ENCODE measurements at regions of chr3 and their contacts with region 1.

Region 1: DNA sequence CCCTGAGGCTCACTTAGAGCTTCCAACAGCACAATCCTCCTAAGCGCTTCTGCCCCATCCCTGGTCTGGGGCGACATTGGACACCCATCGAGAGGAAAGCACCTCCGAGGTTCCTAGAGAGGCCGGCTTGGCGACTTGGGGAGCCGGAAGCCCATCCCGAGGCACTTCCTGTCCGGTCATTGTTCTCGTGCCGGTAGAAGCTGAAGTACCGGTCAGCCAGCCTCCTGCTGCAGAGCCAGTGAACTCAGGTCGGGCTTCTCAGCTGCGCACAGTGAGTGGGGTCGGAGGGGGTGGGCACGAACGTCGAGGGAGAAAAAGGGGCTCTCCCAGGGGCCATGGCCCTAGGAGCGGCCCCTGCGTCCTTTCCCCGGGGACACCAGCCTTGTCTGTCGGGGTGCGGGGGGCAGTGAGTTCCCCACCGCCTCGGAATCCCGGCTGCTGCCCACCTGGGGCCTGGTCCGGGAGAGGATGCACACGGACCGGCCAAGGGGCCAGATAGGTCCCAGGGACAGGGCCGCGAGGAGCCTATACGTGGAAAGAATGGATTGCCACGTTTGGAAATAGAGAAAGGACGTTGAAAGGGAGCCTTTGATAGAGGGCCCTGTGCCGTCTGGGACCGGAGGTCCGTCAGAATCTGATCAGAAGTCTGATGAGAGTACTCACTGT is at the start of gene ZNF35:
- DNase-seq: peak; percentile 91 to 95 (median 94)
- ATAC-seq: peak; percentile 99
- H3K4me3 ChIP-seq: peak within 1 kb of the TSS; percentile 80
- H3K27ac ChIP-seq: peak within 1 kb of the TSS; percentile 40
- H3K4me1 ChIP-seq: peaks cover 0 to 6% of the 10 kb centered on the region in 2 experiments; a peak in 3 of 5 replicates
- H3K27me3 ChIP-seq: no peaks in the 10 kb centered on the region
- CTCF ChIP-seq: no peak
- EP300 ChIP-seq: 0 out of 2 replicates have a peak, but pooled peaks have one; percentile 14
- POLR2A ChIP-seq: peak; percentile 89
- RAD21 ChIP-seq: 0 out of 4 replicates have a peak, but pooled peaks of 1 of the 2 experiments have one; percentile 10
- polyA plus RNA-seq, gene ZNF35: 15.2 to 15.5 TPM

Region 2: GRCh38 chr3:44568561-44568960 is 80.1 kb before region 1 on chr3:
- CTCF ChIA-PET with region 1: no interaction called
- POLR2A ChIA-PET with region 1: no interaction called
- in situ Hi-C with region 1: no loop called
- intact Hi-C with region 1: no loop called
- DNase-seq: no peak
- ATAC-seq: no peak
- H3K4me3 ChIP-seq: no peak overlapping the region
- H3K27ac ChIP-seq: no peak overlapping the region
- H3K4me1 ChIP-seq: no peaks in the 10 kb centered on the region
- H3K27me3 ChIP-seq: no peaks in the 10 kb centered on the region
- CTCF ChIP-seq: no peak
- EP300 ChIP-seq: no peak
- POLR2A ChIP-seq: no peak
- RAD21 ChIP-seq: no peak

Region 3: DNA sequence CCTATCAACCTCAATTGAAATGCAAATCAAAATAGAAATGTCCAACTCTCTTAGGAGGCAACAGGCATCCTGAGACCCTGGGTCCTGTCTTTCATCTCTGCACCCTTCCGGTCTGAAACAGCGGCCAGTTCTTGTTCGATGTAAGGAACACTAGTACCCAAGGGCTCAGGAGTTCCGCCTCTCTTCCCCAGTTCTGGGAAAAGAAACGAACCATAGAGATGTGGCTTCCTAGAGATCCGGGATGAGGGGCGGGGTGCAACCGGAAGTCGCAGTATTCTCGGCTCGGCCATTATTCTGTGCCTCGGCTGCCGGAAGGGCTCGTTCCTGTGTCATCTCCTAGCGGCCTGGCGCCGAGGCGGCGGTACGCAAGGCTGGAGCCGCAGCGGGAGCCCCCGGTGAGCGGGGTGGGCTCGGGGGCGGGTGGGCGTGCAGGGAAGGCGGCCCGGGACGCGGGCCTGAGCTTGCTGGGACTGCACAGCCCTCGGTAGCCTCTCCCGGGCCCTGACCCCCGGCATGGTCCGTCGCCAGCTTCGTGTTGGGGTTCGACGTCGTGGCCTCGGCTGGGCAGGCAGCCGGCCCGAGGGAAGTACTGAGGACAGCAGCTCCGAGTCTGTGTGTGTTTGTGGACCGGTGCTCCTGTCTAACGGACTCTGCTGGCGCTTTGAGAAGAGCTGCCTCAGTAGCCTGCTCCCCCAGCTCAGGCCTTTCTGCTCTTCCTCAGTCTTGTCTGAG is 23.8 kb before region 1 on chr3 and contains the start of gene ZNF197:
- CTCF ChIA-PET with region 1: interaction called, 4 read pairs
- POLR2A ChIA-PET with region 1: interaction called, 14 read pairs
- in situ Hi-C with region 1: no loop called
- intact Hi-C with region 1: loop called (anchors 1 kb)
- DNase-seq: peak; percentile 92 to 97 (median 94)
- ATAC-seq: peak; percentile 98
- H3K4me3 ChIP-seq: peak within 1 kb of the TSS; percentile 57
- H3K27ac ChIP-seq: peak within 1 kb of the TSS; percentile 79
- H3K4me1 ChIP-seq: peaks cover 3 to 6% of the 10 kb centered on the region in 2 experiments; a peak in 3 of 5 replicates
- H3K27me3 ChIP-seq: no peaks in the 10 kb centered on the region
- CTCF ChIP-seq: peak in 2 of 3 experiments; percentile 8 to 32; a peak in 3 of 6 replicates
- EP300 ChIP-seq: 0 out of 2 replicates have a peak, but pooled peaks have one; percentile 24
- POLR2A ChIP-seq: peak; percentile 82
- RAD21 ChIP-seq: no peak; a peak in 1 of 4 replicates
- polyA plus RNA-seq, gene ZNF197: 3.5 to 3.8 TPM

Region 4: DNA sequence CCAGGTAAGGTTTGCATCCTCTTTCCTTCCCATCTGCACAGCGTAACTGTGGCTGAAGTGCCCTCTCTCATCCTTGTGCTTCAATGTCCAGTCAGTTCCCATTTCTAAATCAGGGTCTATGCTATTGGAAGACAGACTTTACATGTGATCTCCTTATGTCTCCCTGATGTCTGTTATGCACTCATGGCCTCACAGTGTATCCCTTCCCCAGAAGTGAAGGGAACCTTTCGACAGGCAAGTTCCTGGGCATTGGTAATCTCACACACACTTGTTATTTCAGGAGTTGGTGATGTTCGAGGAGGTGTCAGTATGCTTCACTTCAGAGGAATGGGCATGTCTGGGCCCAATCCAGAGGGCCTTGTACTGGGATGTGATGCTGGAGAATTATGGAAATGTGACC is 16.5 kb before region 1 on chr3:
- CTCF ChIA-PET with region 1: no interaction called
- POLR2A ChIA-PET with region 1: interaction called, 10 read pairs
- in situ Hi-C with region 1: no loop called
- intact Hi-C with region 1: no loop called
- DNase-seq: no peak
- ATAC-seq: no peak
- H3K4me3 ChIP-seq: no peak overlapping the region
- H3K27ac ChIP-seq: no peak overlapping the region
- H3K4me1 ChIP-seq: no peaks in the 10 kb centered on the region
- H3K27me3 ChIP-seq: no peaks in the 10 kb centered on the region
- CTCF ChIP-seq: no peak
- EP300 ChIP-seq: no peak
- POLR2A ChIP-seq: no peak
- RAD21 ChIP-seq: no peak

Measured in K562 (cell line).